ENCODE measurements at regions of chr2 and their contacts with region 1.

Region 1: DNA sequence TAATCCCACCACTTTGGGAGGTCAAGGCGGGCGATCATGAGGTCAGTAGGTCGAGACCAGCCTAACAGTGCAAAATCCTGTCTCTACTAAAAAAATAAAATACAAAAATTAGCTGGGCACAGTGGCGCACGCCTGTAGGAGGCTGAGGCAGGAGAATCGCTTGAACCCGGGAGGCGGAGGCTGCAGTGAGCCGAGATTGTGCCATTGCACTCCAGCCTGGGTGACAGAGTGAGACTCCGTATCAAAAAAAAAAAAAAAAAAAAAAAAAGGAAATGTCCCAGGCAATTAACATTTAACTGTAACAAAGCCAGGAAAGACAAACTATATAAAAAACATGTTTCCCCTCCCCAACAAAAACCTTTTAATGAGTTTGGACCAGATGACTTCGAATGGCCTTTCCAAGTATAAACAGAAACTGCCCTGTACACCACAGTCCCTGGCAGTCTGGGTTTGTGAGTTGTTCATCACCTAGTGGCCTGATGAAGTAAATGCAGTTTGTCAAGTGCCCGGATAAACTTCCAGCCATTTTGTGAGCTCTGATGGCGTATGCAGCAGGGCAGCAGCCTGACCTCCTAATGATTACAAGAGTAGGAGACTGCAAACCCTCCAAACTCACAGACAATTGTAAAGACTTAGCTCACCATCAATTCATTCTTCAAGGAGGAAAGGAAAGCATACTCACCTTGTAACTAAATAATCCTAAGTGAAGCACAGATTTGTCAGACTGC is 16.6 kb upstream of the PCBP1 start:
- DNase-seq: no peak
- ATAC-seq: peak; percentile 96

Region 2: DNA sequence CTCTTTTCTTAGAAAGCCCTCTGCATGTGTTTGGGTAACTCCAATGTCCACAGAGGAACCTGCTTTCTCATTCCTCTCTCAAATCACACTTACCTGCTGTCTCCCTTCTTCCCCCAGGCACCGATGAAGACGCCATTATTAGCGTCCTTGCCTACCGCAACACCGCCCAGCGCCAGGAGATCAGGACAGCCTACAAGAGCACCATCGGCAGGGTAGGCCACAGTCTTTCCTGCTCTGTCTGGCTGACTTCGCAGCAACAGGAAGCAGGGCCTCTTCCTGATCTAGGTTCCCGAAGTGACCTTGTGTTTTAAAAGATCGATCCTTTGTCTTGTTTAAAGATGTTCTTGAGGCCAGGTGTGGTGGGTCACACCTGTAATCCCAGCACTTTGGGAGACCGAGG is 266.3 kb before region 1 on chr2:
- intact Hi-C with region 1: no loop called
- DNase-seq: no peak
- ATAC-seq: no peak

Region 3: GRCh38 chr2:69914170-69914960 is 156.3 kb before region 1 on chr2:
- intact Hi-C with region 1: loop called (anchors 10 kb)
- DNase-seq: peak; percentile 100
- ATAC-seq: peak; percentile 97

Region 4: DNA sequence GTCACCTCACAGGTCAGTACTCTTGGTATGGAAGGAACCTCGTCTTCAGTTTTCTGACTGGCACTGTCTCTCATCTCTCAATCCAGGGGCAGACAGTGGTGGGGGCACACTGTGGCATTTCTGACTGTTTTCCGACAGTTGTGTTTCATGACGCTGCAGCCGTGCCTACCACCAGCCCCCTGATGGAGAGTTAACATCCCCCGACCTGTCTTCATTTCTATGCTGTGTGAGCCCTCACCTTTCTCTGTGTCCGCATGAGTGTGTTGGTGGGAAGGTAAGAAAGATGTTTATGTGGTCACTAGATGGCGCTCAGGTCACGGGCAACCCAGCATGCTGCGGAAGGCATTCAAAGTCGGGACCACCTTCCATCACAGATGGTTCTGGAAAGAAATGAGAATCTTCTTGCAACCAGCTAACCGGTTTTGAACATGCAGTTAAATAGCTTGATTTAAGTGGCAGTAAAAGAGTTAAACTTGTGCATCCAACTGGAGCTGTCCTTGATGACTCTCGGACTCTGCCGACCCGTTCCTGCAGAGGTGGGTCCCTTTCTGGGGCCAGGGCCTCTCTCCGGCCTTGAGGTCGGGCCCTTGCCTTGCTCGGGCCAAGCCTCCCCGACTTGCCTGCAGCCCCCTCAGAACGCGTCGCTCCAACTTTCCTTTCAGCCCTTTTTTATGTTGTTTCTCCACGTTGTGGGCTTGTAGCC is 1475.0 kb after region 1 on chr2:
- intact Hi-C with region 1: no loop called
- DNase-seq: peak; percentile 64
- ATAC-seq: peak; percentile 83

Measured in sciatic nerve (tissue), 2 donors.